K562 (cell line): ENCODE measurements at regions of chr9 and their contacts with region 1.

Region 1: DNA sequence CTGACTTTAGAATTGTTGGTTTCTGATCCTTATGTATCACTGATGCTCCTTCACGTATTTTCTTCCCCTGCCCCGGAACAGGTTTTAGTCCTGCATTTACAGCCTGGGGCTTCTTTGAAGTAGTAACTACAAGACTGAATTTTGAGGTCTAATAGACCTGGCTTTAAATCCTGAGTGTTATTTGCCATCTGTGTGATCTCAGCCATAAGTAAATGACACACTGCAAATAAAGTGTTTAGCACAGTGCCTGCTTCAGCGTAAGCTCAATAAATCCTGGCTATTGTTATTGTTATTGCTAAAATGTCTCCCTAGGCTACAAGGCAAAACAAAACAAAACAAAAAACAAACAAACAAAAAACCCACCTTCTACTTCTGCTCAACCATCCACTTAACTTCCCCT is 15.6 kb upstream of the LHX6 start:
- DNase-seq: no peak
- ATAC-seq: no peak
- H3K4me3 ChIP-seq: no peak overlapping the region
- H3K27ac ChIP-seq: no peak overlapping the region
- H3K4me1 ChIP-seq: no peaks in the 10 kb centered on the region
- H3K27me3 ChIP-seq: no peaks in the 10 kb centered on the region
- CTCF ChIP-seq: no peak
- EP300 ChIP-seq: no peak
- POLR2A ChIP-seq: no peak
- RAD21 ChIP-seq: no peak

Region 2: GRCh38 chr9:122254761-122255160 is 10.4 kb after region 1 on chr9:
- CTCF ChIA-PET with region 1: no interaction called
- POLR2A ChIA-PET with region 1: interaction called, 17 read pairs
- in situ Hi-C with region 1: no loop called
- intact Hi-C with region 1: no loop called
- DNase-seq: peak in 3 of 4 experiments; percentile 23 to 29 (median 25)
- ATAC-seq: peak; percentile 63
- H3K4me3 ChIP-seq: no peak overlapping the region
- H3K27ac ChIP-seq: peak overlapping the region; percentile 72
- H3K4me1 ChIP-seq: peaks cover 9 to 35% of the 10 kb centered on the region in 2 experiments
- H3K27me3 ChIP-seq: no peaks in the 10 kb centered on the region
- CTCF ChIP-seq: no peak
- EP300 ChIP-seq: no peak
- POLR2A ChIP-seq: no peak
- RAD21 ChIP-seq: no peak

Region 3: GRCh38 chr9:122291458-122291857 is 47.1 kb after region 1 on chr9:
- CTCF ChIA-PET with region 1: no interaction called
- POLR2A ChIA-PET with region 1: no interaction called
- in situ Hi-C with region 1: no loop called
- intact Hi-C with region 1: no loop called
- DNase-seq: no peak
- ATAC-seq: no peak
- H3K4me3 ChIP-seq: no peak overlapping the region
- H3K27ac ChIP-seq: no peak overlapping the region
- H3K4me1 ChIP-seq: no peaks in the 10 kb centered on the region
- H3K27me3 ChIP-seq: no peaks in the 10 kb centered on the region
- CTCF ChIP-seq: no peak
- EP300 ChIP-seq: no peak
- POLR2A ChIP-seq: no peak
- RAD21 ChIP-seq: no peak

Region 4: DNA sequence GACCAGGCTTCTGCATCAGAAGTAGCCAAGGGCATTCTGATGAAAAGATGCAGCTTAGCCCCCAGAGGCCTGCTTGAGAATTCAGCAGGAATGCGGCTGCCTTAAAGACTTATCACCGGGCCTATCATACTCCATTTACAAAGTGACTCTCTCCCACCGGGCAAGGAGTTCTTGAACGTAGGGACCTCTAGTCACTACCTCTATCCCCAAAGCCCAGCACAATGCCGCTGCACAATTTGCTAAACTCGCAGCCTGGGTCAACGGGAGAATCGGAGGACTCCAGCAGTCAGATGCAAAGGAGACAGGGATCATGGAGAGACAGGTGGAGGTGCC is 583.4 kb after region 1 on chr9:
- CTCF ChIA-PET with region 1: no interaction called
- POLR2A ChIA-PET with region 1: no interaction called
- in situ Hi-C with region 1: no loop called
- intact Hi-C with region 1: no loop called
- DNase-seq: peak in 2 of 4 experiments; percentile 17 to 37
- ATAC-seq: peak; percentile 52
- H3K4me3 ChIP-seq: peak overlapping the region; percentile 85
- H3K27ac ChIP-seq: peak overlapping the region; percentile 91
- H3K4me1 ChIP-seq: peaks cover 10 to 13% of the 10 kb centered on the region in 2 experiments; a peak in 4 of 5 replicates
- H3K27me3 ChIP-seq: no peaks in the 10 kb centered on the region
- CTCF ChIP-seq: no peak
- EP300 ChIP-seq: no peak
- POLR2A ChIP-seq: no peak
- RAD21 ChIP-seq: no peak